ENCODE measurements at regions of chr10 and their contacts with region 1.

Region 1: DNA sequence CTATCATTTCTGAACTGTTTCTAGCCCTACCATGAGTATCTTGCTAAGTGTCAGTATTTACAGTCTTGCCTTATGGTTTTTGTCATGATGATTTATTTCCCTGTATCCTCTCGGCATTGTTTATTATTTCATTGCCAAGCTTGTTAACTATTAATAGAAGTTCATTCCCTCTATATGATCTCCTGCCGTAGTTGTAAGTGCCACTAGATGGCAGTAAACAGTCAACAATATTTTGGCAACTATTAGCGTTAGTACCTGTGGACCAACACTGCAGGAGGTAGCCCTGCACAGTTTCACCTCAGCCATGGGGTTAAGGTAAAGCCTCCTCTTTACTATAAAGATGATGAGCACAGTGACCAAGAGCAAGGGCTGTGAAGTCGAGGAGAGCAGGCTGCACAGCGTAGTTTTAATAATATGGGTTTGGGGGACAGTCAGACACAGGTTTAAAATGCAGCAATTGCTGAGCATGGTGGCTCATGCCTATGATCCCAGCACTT is 26.1 kb upstream of the CCNJ start:
- DNase-seq: peak; percentile 53
- ATAC-seq: peak; percentile 86
- H3K4me3 Mint-ChIP-seq: no peak overlapping the region
- H3K27ac Mint-ChIP-seq: no peak overlapping the region
- H3K4me1 Mint-ChIP-seq: peaks cover 2% of the 10 kb centered on the region
- H3K27me3 Mint-ChIP-seq: peaks cover 2% of the 10 kb centered on the region

Region 2: DNA sequence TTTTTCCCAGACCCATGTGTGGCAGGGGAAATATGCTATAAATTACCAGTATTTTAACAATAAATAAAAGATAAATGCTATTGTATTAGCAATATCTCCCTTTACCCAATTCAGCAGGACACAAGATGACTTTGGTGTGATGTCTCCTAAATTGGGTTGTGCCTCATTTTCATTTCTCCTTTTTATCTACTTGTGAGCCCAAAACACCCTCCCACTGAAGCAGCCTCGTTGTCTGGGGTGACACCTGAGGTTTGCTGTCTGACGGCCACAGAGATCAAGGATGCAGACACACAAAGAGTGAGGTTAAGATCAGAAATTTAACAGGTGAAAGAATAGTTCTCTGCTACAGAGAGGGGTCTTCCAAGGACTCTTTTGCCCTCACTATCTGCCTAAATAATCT is 136.5 kb before region 1 on chr10:
- CTCF ChIA-PET with region 1: no interaction called
- DNase-seq: no peak
- ATAC-seq: no peak
- H3K4me3 Mint-ChIP-seq: no peak overlapping the region
- H3K27ac Mint-ChIP-seq: peak overlapping the region; percentile 10
- H3K4me1 Mint-ChIP-seq: peaks cover 18% of the 10 kb centered on the region
- H3K27me3 Mint-ChIP-seq: no peaks in the 10 kb centered on the region

Region 3: GRCh38 chr10:95920798-95921426 is 96.3 kb before region 1 on chr10:
- CTCF ChIA-PET with region 1: no interaction called
- DNase-seq: no peak
- ATAC-seq: no peak
- H3K4me3 Mint-ChIP-seq: no peak overlapping the region
- H3K27ac Mint-ChIP-seq: no peak overlapping the region
- H3K4me1 Mint-ChIP-seq: no peaks in the 10 kb centered on the region
- H3K27me3 Mint-ChIP-seq: peaks cover 21% of the 10 kb centered on the region

Region 4: DNA sequence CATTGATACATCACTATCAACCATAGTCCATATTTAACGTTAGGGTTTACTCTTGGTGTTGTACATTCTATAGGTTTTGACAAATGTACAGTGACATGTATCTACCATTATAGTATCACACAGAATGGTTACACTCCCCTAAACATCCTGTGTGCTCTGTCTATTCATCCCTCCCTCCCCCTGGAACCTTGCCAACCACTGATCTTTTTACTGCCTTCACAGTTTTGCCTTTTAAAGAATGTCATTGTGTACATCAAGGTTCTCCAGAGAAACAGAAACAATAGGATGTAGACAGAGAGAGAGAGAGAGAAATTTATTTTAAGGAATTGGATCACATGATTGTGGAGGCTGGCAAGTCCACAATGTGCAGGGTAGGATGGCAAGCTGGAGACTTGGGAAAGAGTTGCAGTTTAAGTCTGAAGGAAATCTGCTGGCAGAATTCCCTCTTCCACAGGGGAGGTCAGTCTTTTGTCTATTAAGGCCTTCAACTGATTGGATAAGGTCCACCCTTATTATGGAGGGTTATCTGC is 18.9 kb before region 1 on chr10:
- CTCF ChIA-PET with region 1: interaction called, 11 read pairs
- DNase-seq: no peak
- ATAC-seq: no peak
- H3K4me3 Mint-ChIP-seq: no peak overlapping the region
- H3K27ac Mint-ChIP-seq: no peak overlapping the region
- H3K4me1 Mint-ChIP-seq: no peaks in the 10 kb centered on the region
- H3K27me3 Mint-ChIP-seq: no peaks in the 10 kb centered on the region

Region 5: DNA sequence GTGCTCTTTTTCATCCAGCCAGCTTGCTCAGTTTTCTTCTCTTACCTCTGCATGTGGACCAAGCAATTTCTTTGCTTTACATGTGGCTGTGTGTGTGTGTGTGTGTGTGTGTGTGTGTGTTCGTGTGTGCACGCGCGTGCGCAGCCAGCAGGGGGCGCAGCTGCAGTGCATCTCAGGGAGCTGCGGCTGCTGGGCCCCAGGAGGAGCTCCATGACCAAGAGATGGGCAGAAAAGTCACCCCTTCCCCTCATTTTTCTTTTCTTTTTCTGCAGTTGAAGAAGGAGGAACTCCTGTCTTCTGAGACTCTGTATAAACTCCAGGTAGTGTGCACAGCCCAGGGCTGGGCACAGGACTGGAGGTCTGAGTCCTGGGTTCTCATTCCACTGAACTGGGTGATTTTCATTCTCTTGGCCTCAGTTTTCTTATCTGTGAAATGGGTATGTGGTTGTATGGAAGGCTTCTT is 212.4 kb after region 1 on chr10:
- CTCF ChIA-PET with region 1: interaction called, 11 read pairs
- DNase-seq: peak; percentile 74
- ATAC-seq: peak; percentile 68
- H3K4me3 Mint-ChIP-seq: no peak overlapping the region
- H3K27ac Mint-ChIP-seq: no peak overlapping the region
- H3K4me1 Mint-ChIP-seq: no peaks in the 10 kb centered on the region
- H3K27me3 Mint-ChIP-seq: no peaks in the 10 kb centered on the region

Region 6: DNA sequence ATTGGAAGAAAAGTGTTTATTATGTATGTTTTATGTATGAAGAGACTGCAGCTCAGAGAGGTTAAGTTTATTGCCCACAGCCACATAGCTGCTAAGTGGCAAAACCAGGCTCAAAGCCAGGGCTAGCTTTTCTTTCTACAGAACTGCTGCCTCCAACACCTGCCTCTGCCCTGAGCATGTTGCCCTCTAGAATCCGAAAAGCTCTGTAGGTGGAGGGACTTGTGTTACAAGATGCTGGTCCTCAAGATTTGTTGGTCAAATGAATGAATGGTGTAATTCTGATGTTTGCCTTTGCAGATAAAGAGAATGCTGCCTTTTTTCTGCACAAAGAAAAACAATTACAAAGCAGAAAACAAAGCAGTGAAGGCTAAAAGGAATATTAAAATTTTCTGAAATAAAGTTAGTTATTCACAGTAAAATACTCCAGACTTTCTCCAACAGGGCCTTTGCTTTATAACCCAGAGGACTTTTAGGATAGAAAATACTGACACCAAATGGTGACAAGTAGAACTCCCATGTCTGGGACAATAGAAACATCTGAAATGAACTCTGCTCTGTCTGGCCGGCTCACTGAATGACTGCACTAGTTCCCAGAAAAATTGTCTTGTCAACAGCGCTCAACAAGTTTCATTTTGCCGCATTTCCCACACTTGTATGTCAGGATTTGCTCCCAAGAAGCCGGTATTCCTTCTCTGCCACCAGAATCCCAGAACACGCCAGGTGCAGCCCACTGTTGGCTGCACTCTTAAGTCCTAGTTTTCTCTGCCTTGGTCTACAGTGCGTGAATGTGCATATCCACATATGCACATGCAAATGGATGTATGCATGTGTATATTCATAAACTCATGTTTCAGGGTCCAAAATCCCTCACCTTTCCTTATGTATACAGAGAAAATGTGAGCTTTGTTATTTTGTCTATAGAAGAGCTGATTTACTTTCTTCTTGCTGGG is 276.0 kb after region 1 on chr10:
- CTCF ChIA-PET with region 1: interaction called, 11 read pairs
- DNase-seq: no peak
- ATAC-seq: peak; percentile 69
- H3K4me3 Mint-ChIP-seq: no peak overlapping the region
- H3K27ac Mint-ChIP-seq: no peak overlapping the region
- H3K4me1 Mint-ChIP-seq: peaks cover 7% of the 10 kb centered on the region
- H3K27me3 Mint-ChIP-seq: peaks cover 55% of the 10 kb centered on the region

Region 7: GRCh38 chr10:96339957-96340904 is 323.0 kb after region 1 on chr10:
- CTCF ChIA-PET with region 1: interaction called, 15 read pairs
- DNase-seq: peak; percentile 73
- ATAC-seq: peak; percentile 73
- H3K4me3 Mint-ChIP-seq: no peak overlapping the region
- H3K27ac Mint-ChIP-seq: no peak overlapping the region
- H3K4me1 Mint-ChIP-seq: peaks cover 6% of the 10 kb centered on the region
- H3K27me3 Mint-ChIP-seq: peaks cover 39% of the 10 kb centered on the region